CD4-positive, alpha-beta T cell (primary cell): ENCODE measurements at regions of chr6 and their contacts with region 1.

Region 1: DNA sequence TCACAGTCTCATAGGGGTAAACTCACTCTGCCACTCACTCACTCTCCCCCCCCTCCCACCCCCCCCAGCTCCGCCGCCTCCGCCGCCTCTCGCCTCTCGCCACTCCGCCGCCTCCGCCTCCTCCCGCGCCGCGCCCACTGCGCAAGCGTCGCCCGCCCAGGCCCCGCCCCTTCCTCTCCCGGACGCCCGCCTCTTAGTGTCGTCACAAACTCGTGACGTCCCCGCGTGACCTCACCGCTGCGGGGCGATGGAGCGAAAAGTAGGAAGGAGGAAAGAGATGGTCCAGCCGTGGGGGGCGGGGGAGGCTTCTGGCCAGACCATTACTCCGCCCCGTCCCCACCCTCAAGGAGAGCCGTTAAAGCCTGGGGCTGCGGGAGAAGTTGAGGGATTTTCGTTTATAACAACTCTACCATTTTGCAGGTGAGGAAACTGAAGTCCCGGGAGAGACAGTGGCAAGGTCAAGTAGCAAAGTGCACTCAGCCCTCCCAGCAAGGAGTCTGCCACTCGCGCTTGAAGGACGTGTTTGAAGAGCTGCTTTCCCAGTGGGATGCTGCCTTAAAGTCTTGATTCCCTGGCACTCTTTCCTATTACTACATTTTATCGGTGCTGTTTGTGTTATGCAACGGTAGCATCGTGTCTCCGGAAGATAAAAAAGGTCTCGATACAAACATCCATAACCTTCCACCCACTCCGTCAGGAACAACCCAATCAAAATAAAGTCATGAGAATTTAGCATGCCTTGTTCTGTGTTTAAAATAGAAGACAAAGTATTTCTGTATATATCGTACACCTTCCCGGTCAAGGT is at the start of gene ILRUN:
- DNase-seq: peak; percentile 94 to 98 (median 96)
- ATAC-seq: peak; percentile 85
- H3K4me3 ChIP-seq: peak within 1 kb of the TSS; percentile 99
- H3K4me3 Mint-ChIP-seq: peak within 1 kb of the TSS; percentile 98
- H3K27ac ChIP-seq: peak within 1 kb of the TSS; percentile 80 to 87
- H3K27ac Mint-ChIP-seq: peak within 1 kb of the TSS; percentile 98
- H3K4me1 ChIP-seq: peaks cover 33% of the 10 kb centered on the region
- H3K4me1 Mint-ChIP-seq: peaks cover 53% of the 10 kb centered on the region
- H3K27me3 ChIP-seq: no peaks in the 10 kb centered on the region
- H3K27me3 Mint-ChIP-seq: no peaks in the 10 kb centered on the region
- CTCF ChIP-seq: no peak
- total RNA-seq, gene ILRUN: 44.9 to 49.4 TPM

Region 2: GRCh38 chr6:34392497-34393190 is 304.3 kb before region 1 on chr6 and contains the start of gene NUDT3:
- CTCF ChIA-PET with region 1: no interaction called
- POLR2A ChIA-PET with region 1: no interaction called
- intact Hi-C with region 1: loop called in 1 of 2 experiments (anchors 2 kb)
- DNase-seq: peak; percentile 86 to 98 (median 92)
- ATAC-seq: peak; percentile 87
- H3K4me3 ChIP-seq: peak within 1 kb of the TSS; percentile 83
- H3K4me3 Mint-ChIP-seq: peak within 1 kb of the TSS; percentile 96
- H3K27ac ChIP-seq: peak within 1 kb of the TSS; percentile 41 to 87
- H3K27ac Mint-ChIP-seq: no peak within 1 kb of the TSS
- H3K4me1 ChIP-seq: peaks cover 29% of the 10 kb centered on the region
- H3K4me1 Mint-ChIP-seq: peaks cover 31% of the 10 kb centered on the region
- H3K27me3 ChIP-seq: no peaks in the 10 kb centered on the region
- H3K27me3 Mint-ChIP-seq: no peaks in the 10 kb centered on the region
- CTCF ChIP-seq: peak; percentile 89
- total RNA-seq, gene NUDT3: 14.8 to 15.0 TPM

Region 3: GRCh38 chr6:34656378-34657036 is 40.4 kb before region 1 on chr6:
- CTCF ChIA-PET with region 1: no interaction called
- POLR2A ChIA-PET with region 1: interaction called, 15 read pairs
- intact Hi-C with region 1: loop called (anchors 5 kb)
- DNase-seq: peak in 6 of 14 experiments; percentile 6 to 60 (median 53)
- ATAC-seq: peak; percentile 61
- H3K4me3 ChIP-seq: peak overlapping the region; percentile 57
- H3K4me3 Mint-ChIP-seq: peak overlapping the region; percentile 90
- H3K27ac ChIP-seq: peak overlapping the region; percentile 55 to 85
- H3K27ac Mint-ChIP-seq: peak overlapping the region; percentile 84
- H3K4me1 ChIP-seq: peaks cover 31% of the 10 kb centered on the region
- H3K4me1 Mint-ChIP-seq: peaks cover 64% of the 10 kb centered on the region
- H3K27me3 ChIP-seq: no peaks in the 10 kb centered on the region
- H3K27me3 Mint-ChIP-seq: no peaks in the 10 kb centered on the region
- CTCF ChIP-seq: no peak

Region 4: GRCh38 chr6:34671801-34672656 is 24.9 kb before region 1 on chr6:
- CTCF ChIA-PET with region 1: no interaction called
- POLR2A ChIA-PET with region 1: interaction called, 39 read pairs
- intact Hi-C with region 1: loop called (anchors 1 to 2 kb)
- DNase-seq: peak; percentile 40 to 93 (median 70)
- ATAC-seq: peak; percentile 96
- H3K4me3 ChIP-seq: peak overlapping the region; percentile 14
- H3K4me3 Mint-ChIP-seq: peak overlapping the region; percentile 85
- H3K27ac ChIP-seq: peak overlapping the region; percentile 70 to 81
- H3K27ac Mint-ChIP-seq: peak overlapping the region; percentile 96
- H3K4me1 ChIP-seq: peaks cover 61% of the 10 kb centered on the region
- H3K4me1 Mint-ChIP-seq: peaks cover 70% of the 10 kb centered on the region
- H3K27me3 ChIP-seq: no peaks in the 10 kb centered on the region
- H3K27me3 Mint-ChIP-seq: no peaks in the 10 kb centered on the region
- CTCF ChIP-seq: no peak

Region 5: DNA sequence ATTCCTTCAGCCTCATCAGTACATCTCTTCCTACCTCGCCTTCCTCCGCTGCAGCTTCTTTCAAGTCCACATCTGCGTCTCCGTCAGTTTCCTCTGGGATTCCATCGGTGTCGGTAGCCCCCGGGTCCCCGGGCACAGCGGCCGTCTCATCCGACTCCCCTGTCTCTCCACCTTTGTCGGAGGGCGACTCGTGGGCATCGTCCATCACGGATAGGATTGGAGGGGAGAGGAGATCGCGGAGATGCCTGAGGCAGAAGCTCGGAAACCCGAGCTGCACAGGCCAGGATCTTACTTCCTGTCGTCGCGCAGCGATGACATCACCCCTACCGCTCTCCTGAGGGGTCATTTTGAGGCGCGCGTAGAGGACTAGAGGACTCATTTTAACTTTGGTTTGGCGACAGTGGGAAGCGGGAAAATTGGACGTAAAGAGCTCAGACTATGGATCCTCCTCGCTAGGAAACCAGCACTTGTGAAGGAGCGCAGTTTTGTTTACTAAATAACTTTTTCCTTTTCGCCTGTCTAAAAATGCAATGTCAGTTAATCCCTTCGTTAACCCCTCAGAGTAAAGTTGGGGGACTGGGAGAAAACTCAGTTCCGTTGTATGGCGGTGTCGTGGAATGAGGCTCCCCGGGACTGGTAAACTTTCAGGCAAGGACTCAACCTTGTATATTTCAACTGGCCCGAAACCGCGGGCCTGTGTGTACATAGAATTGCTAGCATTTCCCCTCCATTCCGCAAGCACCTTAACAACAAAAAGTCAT is 191.0 kb after region 1 on chr6 and contains the start of gene TAF11:
- CTCF ChIA-PET with region 1: no interaction called
- POLR2A ChIA-PET with region 1: interaction called, 3 read pairs
- intact Hi-C with region 1: loop called in 1 of 2 experiments (anchors 5 kb)
- DNase-seq: peak; percentile 78 to 96 (median 87)
- ATAC-seq: peak; percentile 69
- H3K4me3 ChIP-seq: peak within 1 kb of the TSS; percentile 98
- H3K4me3 Mint-ChIP-seq: peak within 1 kb of the TSS; percentile 97
- H3K27ac ChIP-seq: peak within 1 kb of the TSS; percentile 90 to 93
- H3K27ac Mint-ChIP-seq: peak within 1 kb of the TSS; percentile 97
- H3K4me1 ChIP-seq: peaks cover 36% of the 10 kb centered on the region
- H3K4me1 Mint-ChIP-seq: peaks cover 62% of the 10 kb centered on the region
- H3K27me3 ChIP-seq: no peaks in the 10 kb centered on the region
- H3K27me3 Mint-ChIP-seq: no peaks in the 10 kb centered on the region
- CTCF ChIP-seq: no peak
- total RNA-seq, gene TAF11: 31.5 to 38.1 TPM

Region 6: GRCh38 chr6:35120746-35121145 is 423.8 kb after region 1 on chr6:
- CTCF ChIA-PET with region 1: no interaction called
- POLR2A ChIA-PET with region 1: no interaction called
- intact Hi-C with region 1: no loop called
- DNase-seq: no peak
- ATAC-seq: no peak
- H3K4me3 ChIP-seq: no peak overlapping the region
- H3K4me3 Mint-ChIP-seq: no peak overlapping the region
- H3K27ac ChIP-seq: no peak overlapping the region
- H3K27ac Mint-ChIP-seq: no peak overlapping the region
- H3K4me1 ChIP-seq: no peaks in the 10 kb centered on the region
- H3K4me1 Mint-ChIP-seq: no peaks in the 10 kb centered on the region
- H3K27me3 ChIP-seq: no peaks in the 10 kb centered on the region
- H3K27me3 Mint-ChIP-seq: peaks cover 19% of the 10 kb centered on the region
- CTCF ChIP-seq: no peak